Activated T-helper 2 cell treated with anti-CD3 and anti-CD28 coated beads, Interferon-gamma antibody, Interleukin-2, Interleukin-4, amounts not matched to agents 10 μg/mL and 5 μg/mL and 100 μg/mL, durations not matched to agents 14 hours and 24 hours and 36 hours (primary cell): ENCODE measurements at regions of chr15 and their contacts with region 1.

Region 1: DNA sequence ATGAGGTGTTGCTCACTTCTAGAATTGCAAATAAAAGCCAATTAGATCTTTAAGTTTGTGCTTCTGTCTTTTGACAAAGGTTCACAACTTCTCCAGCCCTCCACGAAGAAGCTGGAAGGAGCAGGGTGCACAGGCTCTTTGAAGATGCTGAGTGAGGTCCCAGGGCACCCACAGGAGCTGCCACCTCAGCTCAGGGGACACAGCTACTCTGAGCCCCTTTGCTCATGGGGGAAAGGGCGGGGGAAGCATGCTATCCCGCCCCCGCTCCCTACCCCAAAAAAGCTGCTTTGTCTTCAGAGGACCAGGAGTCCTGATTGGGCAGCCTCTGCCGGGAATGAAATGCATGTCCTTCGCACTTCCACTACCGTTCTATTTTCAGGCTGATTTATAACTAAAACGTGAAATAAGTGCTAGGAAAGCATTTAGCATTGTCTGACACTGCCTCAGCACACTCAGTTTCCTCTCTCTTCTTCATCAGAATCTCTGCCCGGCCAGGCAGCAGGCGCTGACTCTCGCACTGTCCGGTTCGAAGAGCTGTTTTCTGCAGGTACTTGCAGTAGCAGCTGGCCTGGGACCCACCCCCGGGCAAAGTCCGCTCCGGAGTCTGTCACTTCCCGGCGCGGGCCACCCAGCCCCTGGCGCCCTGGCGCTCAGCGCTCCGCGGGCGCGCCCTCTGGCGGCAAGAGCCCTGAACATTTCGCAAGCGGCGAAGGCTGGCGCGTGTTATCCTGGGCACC is 45.5 kb upstream of the KLHL25 start:
- DNase-seq: peak; percentile 74
- H3K4me3 Mint-ChIP-seq: peak overlapping the region; percentile 72
- H3K27ac Mint-ChIP-seq: no peak overlapping the region
- H3K4me1 Mint-ChIP-seq: peaks cover 5% of the 10 kb centered on the region
- H3K27me3 Mint-ChIP-seq: peaks cover 13% of the 10 kb centered on the region

Region 2: DNA sequence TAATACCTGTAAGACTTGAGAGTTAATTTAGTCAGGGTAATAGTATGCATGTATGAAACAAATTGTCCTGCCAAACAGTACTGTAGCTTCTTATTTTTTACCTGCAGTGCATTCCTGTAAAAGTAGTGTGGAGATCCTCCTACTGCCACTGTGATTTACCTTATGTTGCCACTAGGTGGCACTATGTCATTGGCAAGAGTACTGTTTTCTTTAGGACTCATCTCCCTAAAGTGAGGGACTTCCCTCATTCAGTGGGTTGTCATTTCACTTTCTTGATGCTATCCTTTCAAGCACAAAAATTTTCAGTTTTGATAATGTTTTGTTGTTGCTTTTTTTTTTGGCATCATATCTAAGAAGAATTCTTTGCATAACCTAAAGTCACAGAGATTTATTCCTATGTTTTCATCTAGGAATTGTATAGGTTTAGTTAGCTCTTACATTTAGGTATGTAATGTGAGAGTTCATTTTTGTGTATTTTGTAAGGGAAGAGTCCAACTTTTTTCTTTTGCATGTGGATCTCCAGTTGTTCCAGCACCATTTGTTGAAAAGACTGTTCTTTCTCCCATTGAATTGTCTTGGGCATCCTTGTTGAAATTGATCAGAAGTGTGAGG is 354.2 kb before region 1 on chr15:
- intact Hi-C with region 1: loop called (anchors 2 kb)
- DNase-seq: peak; percentile 40
- H3K4me3 Mint-ChIP-seq: no peak overlapping the region
- H3K27ac Mint-ChIP-seq: no peak overlapping the region
- H3K4me1 Mint-ChIP-seq: peaks cover 60% of the 10 kb centered on the region
- H3K27me3 Mint-ChIP-seq: no peaks in the 10 kb centered on the region

Region 3: DNA sequence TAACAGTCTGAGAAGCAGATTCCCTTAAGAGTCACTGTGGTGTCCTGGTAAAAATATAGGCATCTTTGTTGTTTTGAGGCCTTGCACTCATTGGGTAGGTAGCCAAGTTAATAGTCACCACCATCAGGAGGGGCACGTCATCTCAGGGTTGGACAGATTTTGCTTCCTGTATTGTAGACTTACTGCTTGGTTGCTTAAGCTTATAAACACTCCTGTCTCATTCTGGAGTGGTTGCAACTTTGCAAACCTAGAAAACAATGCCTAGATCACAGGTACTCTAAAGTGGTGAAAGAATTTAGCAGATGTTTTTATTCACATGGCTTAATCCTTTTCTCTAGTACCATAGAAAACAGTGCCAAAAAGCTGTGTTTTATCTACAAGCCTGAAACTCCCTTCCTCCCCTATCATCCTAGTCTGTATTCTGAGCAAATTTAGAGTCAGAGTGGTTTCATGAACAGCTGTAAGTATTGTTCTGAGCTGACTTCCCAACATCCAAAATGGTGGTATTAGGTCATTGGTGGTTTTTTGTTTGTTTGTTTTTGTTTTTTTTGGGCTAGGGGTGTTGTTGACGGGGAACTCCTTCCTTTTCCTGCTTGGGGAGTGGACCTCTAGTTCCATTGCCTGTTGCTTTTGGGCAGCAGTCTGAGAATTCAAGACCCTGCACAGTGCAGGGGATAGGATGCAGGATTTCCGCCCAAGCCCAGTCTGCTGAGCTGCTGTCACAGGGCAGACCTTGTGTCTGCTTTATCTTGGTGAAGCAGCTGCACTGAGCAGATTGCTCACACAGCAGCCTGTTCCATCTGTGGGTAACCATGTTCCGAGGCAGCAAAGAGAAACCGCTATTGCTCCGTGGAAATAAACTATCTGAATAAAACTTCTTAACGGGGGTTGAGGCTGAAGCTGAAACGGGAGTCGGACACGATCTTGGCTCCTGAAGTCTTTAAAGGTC is 257.8 kb before region 1 on chr15:
- intact Hi-C with region 1: no loop called
- DNase-seq: peak; percentile 68
- H3K4me3 Mint-ChIP-seq: peak overlapping the region; percentile 83
- H3K27ac Mint-ChIP-seq: peak overlapping the region; percentile 98
- H3K4me1 Mint-ChIP-seq: peaks cover 73% of the 10 kb centered on the region
- H3K27me3 Mint-ChIP-seq: no peaks in the 10 kb centered on the region

Region 4: DNA sequence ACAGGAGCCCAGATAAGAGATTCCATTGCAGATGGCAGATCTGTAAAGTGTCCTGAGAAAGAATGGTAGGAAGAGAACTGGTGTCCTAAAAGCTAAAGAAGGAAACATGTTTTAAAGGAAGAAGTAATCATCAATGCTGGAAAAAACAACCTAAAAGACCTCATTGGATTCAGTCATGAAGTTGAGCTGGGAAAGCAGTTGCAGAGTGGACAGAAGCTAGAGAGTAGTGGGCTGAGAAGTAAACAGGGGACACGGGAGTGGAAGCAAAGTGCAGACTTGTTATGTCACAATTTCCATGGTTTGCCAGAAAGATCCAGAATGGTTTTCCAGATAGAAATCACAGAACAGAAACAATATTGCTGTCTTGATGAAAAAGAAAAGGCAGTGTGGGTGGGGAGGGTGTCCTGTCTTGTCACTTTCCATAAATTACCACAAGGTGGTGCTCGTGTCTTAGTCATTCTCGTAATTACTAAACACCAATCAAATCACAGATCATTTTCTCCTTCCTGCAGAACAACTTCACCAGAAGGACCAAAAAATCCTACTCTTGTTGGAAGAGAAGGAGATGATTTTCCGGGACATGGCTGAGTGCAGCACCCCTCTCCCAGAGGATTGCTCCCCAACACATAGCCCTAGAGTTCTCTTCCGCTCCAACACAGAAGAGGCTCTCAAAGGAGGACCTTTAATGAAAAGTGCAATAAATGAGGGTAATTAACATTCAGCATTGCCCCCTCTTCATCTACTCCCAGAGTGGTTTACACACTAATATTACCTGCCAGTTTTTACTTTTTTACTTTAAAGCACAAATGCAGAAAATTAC is 110.0 kb before region 1 on chr15:
- intact Hi-C with region 1: loop called (anchors 1 kb)
- DNase-seq: peak; percentile 30
- H3K4me3 Mint-ChIP-seq: no peak overlapping the region
- H3K27ac Mint-ChIP-seq: peak overlapping the region; percentile 20
- H3K4me1 Mint-ChIP-seq: peaks cover 23% of the 10 kb centered on the region
- H3K27me3 Mint-ChIP-seq: no peaks in the 10 kb centered on the region

Region 5: GRCh38 chr15:85794603-85795336 is 45.5 kb before region 1 on chr15 and contains the start of gene KLHL25:
- intact Hi-C with region 1: loop called (anchors 2 kb)
- DNase-seq: peak; percentile 92
- H3K4me3 Mint-ChIP-seq: peak within 1 kb of the TSS; percentile 89
- H3K27ac Mint-ChIP-seq: peak within 1 kb of the TSS; percentile 82
- H3K4me1 Mint-ChIP-seq: peaks cover 23% of the 10 kb centered on the region
- H3K27me3 Mint-ChIP-seq: no peaks in the 10 kb centered on the region
- total RNA-seq, gene KLHL25: 8.5 and 9.0 TPM in 2 replicates